ENCODE measurements at regions of chr1 and their contacts with region 1.

Region 1: DNA sequence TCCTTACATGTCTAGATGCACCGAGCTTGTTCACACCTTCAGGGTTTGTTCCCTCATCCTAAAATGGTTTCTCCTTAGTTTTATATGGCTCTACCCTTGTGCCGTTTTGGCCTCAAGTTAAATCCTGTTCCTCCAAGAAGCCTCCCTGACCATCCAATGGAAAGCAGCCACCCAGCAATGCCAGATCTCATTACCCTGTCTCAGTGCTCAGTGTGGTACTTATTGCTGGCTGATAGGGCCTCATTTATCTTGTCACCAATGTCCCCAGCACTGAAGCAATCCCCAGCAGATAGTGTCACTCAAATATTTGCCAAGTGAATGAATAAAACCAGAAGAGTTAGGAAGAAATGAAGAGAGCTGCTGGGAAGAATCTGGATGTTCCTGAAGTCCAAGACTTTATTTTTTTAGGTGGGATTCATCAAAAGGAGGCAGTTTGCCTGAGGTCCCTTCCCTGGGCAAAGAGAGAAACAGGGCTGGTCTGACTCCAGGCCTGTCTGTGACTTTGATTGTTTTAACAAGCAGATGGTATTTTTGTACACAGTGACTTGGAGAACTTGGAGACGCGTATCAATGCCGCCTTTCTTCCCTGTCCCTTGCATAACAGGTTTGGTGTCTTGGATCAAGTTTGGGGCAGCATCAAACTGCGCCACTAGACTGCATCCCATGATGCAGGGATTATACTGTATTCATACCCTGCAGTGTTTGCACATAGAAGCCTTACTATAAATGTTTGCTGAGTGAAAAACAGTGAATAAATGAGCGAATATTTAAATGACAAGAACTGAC is 221.2 kb downstream of the DISC1 start:
- DNase-seq: no peak
- ATAC-seq: peak; percentile 75

Region 2: DNA sequence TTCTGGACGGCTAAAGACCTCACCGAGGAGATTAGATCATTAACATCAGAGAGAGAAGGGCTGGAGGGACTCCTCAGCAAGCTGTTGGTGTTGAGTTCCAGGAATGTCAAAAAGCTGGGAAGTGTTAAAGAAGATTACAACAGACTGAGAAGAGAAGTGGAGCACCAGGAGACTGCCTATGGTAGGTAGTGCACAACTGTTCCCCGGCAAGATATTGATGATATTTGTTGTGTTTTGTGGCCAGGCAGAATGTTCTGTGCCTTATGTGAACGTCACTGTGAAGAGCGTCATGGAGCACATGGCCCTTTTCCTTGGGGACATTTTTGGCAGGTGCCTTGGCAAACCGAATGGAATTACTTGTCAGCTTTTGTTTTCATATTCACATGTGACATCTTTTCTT is 29.5 kb before region 1 on chr1:
- intact Hi-C with region 1: loop called in 1 of 2 experiments (anchors 1 kb)
- DNase-seq: peak; percentile 53
- ATAC-seq: peak; percentile 74 to 79

Region 3: GRCh38 chr1:231899713-231900440 is 52.1 kb after region 1 on chr1:
- intact Hi-C with region 1: no loop called
- DNase-seq: no peak
- ATAC-seq: no peak

Region 4: GRCh38 chr1:231931846-231932454 is 84.1 kb after region 1 on chr1:
- intact Hi-C with region 1: no loop called
- DNase-seq: no peak
- ATAC-seq: no peak